Prostate gland (tissue), 2 donors: ENCODE measurements at regions of chr2 and their contacts with region 1.

Region 1: GRCh38 chr2:34096562-34097171 is 497.6 kb upstream of the FAM98A start:
- DNase-seq: peak; percentile 41
- H3K4me3 ChIP-seq: no peak overlapping the region
- H3K27ac ChIP-seq: no peak overlapping the region
- H3K4me1 ChIP-seq: no peaks in the 10 kb centered on the region
- H3K27me3 ChIP-seq: no peaks in the 10 kb centered on the region
- CTCF ChIP-seq: peak; percentile 67 to 85 (median 68)
- POLR2A ChIP-seq: no peak

Region 2: DNA sequence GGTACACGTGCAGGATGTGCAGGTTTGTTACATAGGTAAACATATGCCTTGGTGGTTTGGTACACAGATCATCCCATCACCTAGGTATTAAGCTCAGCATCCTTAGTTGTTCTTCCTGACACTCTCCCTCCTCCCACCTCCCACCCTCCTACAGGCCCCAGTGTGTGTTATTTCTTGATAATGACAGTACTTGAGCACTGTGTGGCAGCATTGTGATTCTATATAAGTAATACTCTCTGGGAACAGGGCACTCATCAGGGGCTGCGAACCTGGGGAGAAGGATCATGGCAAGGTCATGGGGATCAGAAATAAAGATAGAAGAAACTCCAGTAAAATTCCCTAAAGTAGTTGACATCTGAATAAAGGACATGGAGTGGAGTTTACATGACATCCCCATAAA is 1002.7 kb after region 1 on chr2:
- intact Hi-C with region 1: no loop called
- DNase-seq: no peak
- H3K4me3 ChIP-seq: no peak overlapping the region
- H3K27ac ChIP-seq: no peak overlapping the region
- H3K4me1 ChIP-seq: no peaks in the 10 kb centered on the region
- H3K27me3 ChIP-seq: no peaks in the 10 kb centered on the region
- CTCF ChIP-seq: no peak
- POLR2A ChIP-seq: no peak

Region 3: DNA sequence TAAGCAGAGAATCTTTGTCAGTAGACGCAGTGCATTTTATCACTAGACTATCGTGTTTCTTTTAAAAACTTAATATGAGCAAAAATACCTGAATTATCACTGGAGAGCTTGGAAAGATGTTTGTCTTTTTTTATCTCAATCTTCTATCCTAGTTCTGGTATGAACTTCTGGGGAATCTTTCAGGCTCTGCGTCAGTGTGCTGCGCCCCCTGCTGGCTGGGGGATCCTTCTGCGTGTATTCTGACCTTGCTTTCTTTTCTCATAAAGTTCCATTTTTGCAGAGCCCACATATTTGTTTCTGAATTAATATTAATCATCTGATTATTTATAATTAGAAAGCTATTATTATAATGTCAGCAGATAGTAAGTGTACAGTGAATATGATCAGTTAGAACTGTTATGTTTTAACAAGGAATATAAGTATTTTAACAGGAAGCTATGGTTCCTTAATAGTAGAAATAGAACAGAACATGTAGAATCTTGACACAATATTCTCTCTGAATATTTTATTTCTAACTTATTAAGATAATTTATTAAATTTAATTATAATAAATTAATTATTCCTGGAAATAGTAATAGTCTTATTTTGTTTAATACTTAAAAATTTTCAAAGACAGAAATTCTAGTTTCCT is 1313.9 kb after region 1 on chr2:
- intact Hi-C with region 1: loop called (anchors 5 kb)
- DNase-seq: peak; percentile 10
- H3K4me3 ChIP-seq: no peak overlapping the region
- H3K27ac ChIP-seq: no peak overlapping the region
- H3K4me1 ChIP-seq: no peaks in the 10 kb centered on the region
- H3K27me3 ChIP-seq: no peaks in the 10 kb centered on the region
- CTCF ChIP-seq: peak; percentile 56 to 75 (median 66)
- POLR2A ChIP-seq: no peak